Keratinocyte (primary cell): ENCODE measurements at regions of chr2 and their contacts with region 1.

Region 1: GRCh38 chr2:101036562-101037457 is 34.7 kb downstream of the RPL31 start:
- DNase-seq: no peak
- H3K4me3 ChIP-seq: no peak overlapping the region
- H3K27ac ChIP-seq: no peak overlapping the region
- H3K4me1 ChIP-seq: no peaks in the 10 kb centered on the region
- H3K27me3 ChIP-seq: no peaks in the 10 kb centered on the region
- CTCF ChIP-seq: peak in 2 of 3 experiments; percentile 28 to 60

Region 2: GRCh38 chr2:101205521-101205998 is 168.8 kb after region 1 on chr2:
- dilution Hi-C with region 1: loop called (anchors 25 kb)
- DNase-seq: peak; percentile 52
- H3K4me3 ChIP-seq: peak overlapping the region in 2 of 3 experiments; percentile 52 to 54
- H3K27ac ChIP-seq: peak overlapping the region; percentile 56
- H3K4me1 ChIP-seq: peaks cover 8% of the 10 kb centered on the region
- H3K27me3 ChIP-seq: no peaks in the 10 kb centered on the region
- CTCF ChIP-seq: peak; percentile 58 to 81 (median 63)